ENCODE measurements at regions of chr12 and their contacts with region 1.

Region 1: GRCh38 chr12:94973221-94973620 is 30.3 kb downstream of the NDUFA12 start:
- DNase-seq: no peak
- H3K4me3 ChIP-seq: no peak overlapping the region
- H3K27ac ChIP-seq: no peak overlapping the region
- H3K4me1 ChIP-seq: no peaks in the 10 kb centered on the region
- H3K27me3 ChIP-seq: no peaks in the 10 kb centered on the region
- CTCF ChIP-seq: no peak
- POLR2A ChIP-seq: no peak

Region 2: DNA sequence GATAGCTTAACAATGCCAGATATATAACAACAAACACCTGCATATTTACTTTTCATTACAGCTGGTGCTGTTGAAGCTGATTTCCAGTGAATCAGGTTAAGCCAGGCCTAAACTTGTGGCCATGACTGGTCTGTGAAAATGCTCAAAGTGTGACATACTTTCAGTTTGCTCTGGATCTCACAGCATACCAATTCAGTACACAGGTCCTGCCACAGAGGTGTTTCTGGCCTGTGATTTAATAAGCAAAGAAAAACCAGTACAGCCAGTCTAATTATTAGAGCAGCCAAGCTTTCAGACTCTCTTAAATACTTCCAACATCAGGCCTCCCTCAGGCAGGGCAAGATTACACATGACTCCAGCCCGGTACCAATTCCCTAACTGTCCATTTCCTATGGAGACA is 295.4 kb before region 1 on chr12:
- CTCF ChIA-PET with region 1: no interaction called
- POLR2A ChIA-PET with region 1: no interaction called
- dilution Hi-C with region 1: no loop called
- intact Hi-C with region 1: no loop called
- DNase-seq: no peak
- H3K4me3 ChIP-seq: no peak overlapping the region
- H3K27ac ChIP-seq: no peak overlapping the region
- H3K4me1 ChIP-seq: peaks cover 40% of the 10 kb centered on the region
- H3K27me3 ChIP-seq: no peaks in the 10 kb centered on the region
- CTCF ChIP-seq: no peak
- POLR2A ChIP-seq: no peak

Region 3: GRCh38 chr12:94962670-94963069 is 10.6 kb before region 1 on chr12:
- CTCF ChIA-PET with region 1: interaction called, 10 read pairs
- POLR2A ChIA-PET with region 1: no interaction called
- dilution Hi-C with region 1: no loop called
- intact Hi-C with region 1: no loop called
- DNase-seq: no peak
- H3K4me3 ChIP-seq: no peak overlapping the region
- H3K27ac ChIP-seq: no peak overlapping the region
- H3K4me1 ChIP-seq: peaks cover 5% of the 10 kb centered on the region
- H3K27me3 ChIP-seq: no peaks in the 10 kb centered on the region
- CTCF ChIP-seq: no peak
- POLR2A ChIP-seq: no peak